ENCODE measurements at regions of chr1 and their contacts with region 1.

Region 1: DNA sequence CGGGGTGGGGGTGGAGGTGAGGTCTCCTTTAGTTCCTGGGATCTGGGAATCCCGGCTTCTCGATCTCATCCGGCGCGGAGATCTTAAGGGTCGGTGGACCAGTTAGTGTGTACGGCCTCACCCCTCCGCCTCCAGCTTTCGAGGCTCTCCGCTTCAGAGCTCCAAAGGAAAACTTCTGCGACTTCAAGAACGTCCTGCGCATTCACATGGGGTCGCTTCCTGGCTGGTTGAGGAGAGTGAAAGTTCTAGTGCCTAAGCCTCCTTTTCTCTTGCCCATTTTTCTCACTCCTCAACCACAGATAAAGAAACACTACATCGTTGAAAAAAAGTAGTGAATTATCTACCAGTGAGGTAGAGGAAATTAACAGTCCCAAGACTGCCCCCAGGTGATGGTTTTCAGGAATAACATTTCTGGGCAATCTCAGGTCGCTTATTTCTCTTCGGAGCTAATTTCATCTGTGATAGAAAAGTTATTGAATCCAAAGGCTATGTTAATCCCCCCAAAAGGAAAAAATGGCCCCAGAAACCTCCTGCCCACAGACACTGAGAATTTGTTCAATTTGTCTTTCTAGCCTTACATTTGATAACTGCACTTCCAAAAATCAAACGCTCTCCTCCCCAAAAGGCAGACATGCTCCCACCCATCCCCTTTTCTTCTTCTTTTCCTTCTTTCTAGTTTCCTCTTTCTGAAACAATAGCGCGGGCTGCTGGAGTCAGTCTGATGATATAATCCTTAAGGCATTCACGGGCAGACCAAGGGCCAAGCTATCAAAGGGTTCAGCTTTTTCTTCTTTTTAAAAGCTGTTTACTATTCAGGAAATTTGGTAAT is 20.6 kb upstream of the TBX15 start:
- DNase-seq: no peak
- H3K4me3 ChIP-seq: peak overlapping the region; percentile 45
- CTCF ChIP-seq: peak; percentile 27

Region 2: GRCh38 chr1:117860896-117861610 is 1147.6 kb before region 1 on chr1:
- CTCF ChIA-PET with region 1: no interaction called
- POLR2A ChIA-PET with region 1: no interaction called
- DNase-seq: peak; percentile 70
- H3K4me3 ChIP-seq: no peak overlapping the region
- CTCF ChIP-seq: no peak

Region 3: GRCh38 chr1:118151312-118151937 is 857.3 kb before region 1 on chr1:
- CTCF ChIA-PET with region 1: interaction called, 12 read pairs
- POLR2A ChIA-PET with region 1: no interaction called
- DNase-seq: no peak
- H3K4me3 ChIP-seq: no peak overlapping the region
- CTCF ChIP-seq: peak; percentile 56

Region 4: GRCh38 chr1:118984086-118984721 is 24.5 kb before region 1 on chr1:
- CTCF ChIA-PET with region 1: interaction called, 11 read pairs
- POLR2A ChIA-PET with region 1: interaction called, 7 read pairs
- DNase-seq: no peak
- H3K4me3 ChIP-seq: peak overlapping the region; percentile 83
- CTCF ChIP-seq: no peak

Region 5: DNA sequence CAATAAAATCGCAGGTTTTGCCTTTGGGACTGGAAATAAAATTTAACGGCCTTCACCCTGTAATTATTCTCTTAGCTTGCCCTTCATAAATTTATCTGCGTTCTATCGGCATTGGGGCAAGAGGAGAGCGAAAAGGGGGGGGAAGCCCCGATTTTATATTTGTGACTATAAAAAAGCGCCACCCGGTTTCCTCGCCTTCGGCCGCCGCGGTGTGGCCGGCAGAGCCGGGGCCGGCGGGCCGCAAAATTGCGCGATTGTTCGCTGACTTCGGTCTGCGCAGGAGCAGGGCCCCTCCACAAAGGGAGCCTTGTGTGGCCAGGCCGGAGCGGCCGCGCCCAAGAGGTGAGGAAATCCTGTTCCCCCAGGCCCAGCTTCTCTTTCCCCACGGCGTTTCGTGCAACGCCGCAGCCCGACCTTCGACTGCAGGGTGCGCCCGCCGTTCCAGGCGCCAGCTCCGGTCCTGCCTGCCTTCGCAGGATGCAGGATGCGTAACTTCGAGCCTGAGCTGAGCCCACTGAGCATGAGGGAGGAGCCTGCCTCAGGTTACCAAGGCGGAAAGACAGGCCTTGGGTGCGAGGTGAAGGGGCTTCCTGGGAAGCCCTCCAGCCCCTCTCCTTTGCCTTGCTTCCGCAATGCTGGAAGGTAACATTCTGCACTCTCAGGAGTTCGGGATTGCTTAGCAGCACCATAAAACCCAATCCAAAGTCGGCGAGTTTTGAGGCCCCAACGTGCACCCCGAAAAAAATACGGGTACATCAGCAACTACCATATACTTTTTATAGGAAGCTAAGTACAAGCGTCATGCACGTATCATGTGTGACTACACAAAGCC is 15.6 kb before region 1 on chr1:
- CTCF ChIA-PET with region 1: interaction called, 13 read pairs
- POLR2A ChIA-PET with region 1: interaction called, 7 read pairs
- DNase-seq: no peak
- H3K4me3 ChIP-seq: no peak overlapping the region
- CTCF ChIP-seq: no peak

Measured in AG04449 (cell line).